ENCODE measurements at regions of chr17 and their contacts with region 1.

Region 1: GRCh38 chr17:45148183-45149036 is at the start of gene HEXIM1:
- H3K4me3 ChIP-seq: peak within 1 kb of the TSS; percentile 72
- H3K27ac ChIP-seq: peak within 1 kb of the TSS; percentile 92
- H3K4me1 ChIP-seq: peaks cover 10% of the 10 kb centered on the region; the same call in 1 of the 2 replicates
- CTCF ChIP-seq: peak; percentile 40; the same call in 1 of the 2 replicates

Region 2: GRCh38 chr17:44899069-44899782 is 249.2 kb before region 1 on chr17 and contains the start of gene EFTUD2:
- CTCF ChIA-PET with region 1: no interaction called
- POLR2A ChIA-PET with region 1: interaction called, 10 read pairs
- H3K4me3 ChIP-seq: peak within 1 kb of the TSS; percentile 74
- H3K27ac ChIP-seq: peak within 1 kb of the TSS; percentile 93
- H3K4me1 ChIP-seq: peaks cover 24% of the 10 kb centered on the region
- CTCF ChIP-seq: no peak; the same call in 1 of the 2 replicates

Region 3: GRCh38 chr17:45021607-45022287 is 126.7 kb before region 1 on chr17:
- CTCF ChIA-PET with region 1: no interaction called
- POLR2A ChIA-PET with region 1: no interaction called
- H3K4me3 ChIP-seq: peak overlapping the region; percentile 3; the same call in 1 of the 2 replicates
- H3K27ac ChIP-seq: no peak overlapping the region; the same call in 1 of the 2 replicates
- H3K4me1 ChIP-seq: peaks cover 3% of the 10 kb centered on the region; the same call in 1 of the 2 replicates
- CTCF ChIP-seq: 0 out of 2 replicates have a peak, but pooled peaks have one; percentile 28

Region 4: GRCh38 chr17:45129426-45129939 is 18.9 kb before region 1 on chr17:
- CTCF ChIA-PET with region 1: interaction called, 209 read pairs
- POLR2A ChIA-PET with region 1: interaction called, 192 read pairs
- H3K4me3 ChIP-seq: no peak overlapping the region
- H3K27ac ChIP-seq: no peak overlapping the region
- H3K4me1 ChIP-seq: peaks cover 3% of the 10 kb centered on the region
- CTCF ChIP-seq: no peak

Region 5: GRCh38 chr17:45197555-45198334 is 49.3 kb after region 1 on chr17:
- CTCF ChIA-PET with region 1: interaction called, 185 read pairs
- POLR2A ChIA-PET with region 1: interaction called, 213 read pairs
- H3K4me3 ChIP-seq: no peak overlapping the region
- H3K27ac ChIP-seq: peak overlapping the region; percentile 34
- H3K4me1 ChIP-seq: peaks cover 6% of the 10 kb centered on the region
- CTCF ChIP-seq: peak; percentile 99

Region 6: DNA sequence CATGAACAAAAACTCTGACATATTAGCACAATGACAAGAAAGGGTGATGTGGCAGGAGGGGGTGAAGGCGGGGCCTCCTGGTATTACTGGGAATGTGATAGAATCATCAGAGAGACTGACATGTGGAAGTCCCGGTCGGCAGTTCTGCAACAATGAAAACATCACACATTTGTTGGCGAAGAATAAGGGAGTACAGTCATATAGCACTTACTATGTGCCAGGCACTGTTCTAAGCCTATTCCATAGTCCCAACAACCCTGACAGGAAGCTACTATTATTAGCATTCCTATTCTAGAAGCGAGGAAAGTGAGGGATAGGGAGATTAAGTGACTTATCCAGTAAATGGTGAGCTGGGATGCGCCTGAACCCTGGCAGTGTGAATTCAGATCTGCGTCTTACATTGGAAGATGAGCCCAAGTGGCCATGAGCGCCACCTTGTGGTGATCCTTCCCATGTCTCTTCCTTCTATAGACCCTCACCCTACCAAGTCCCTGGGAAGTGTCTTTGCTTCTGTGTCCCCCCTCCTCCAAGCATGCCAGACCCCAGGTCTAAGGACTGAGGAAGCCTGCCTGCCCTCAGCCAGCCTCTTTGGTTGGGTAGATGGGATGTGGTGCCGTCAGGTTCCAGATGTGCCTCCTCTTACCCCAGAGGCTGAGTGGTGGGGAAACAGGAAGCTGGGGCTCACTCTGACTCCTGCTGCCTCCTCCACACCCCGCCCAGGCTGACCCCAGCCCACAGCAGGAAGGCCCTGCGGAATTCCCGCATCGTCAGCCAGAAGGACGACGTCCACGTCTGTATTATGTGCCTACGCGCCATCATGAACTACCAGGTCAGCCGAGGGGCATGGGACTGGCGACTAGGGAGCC is 87.2 kb after region 1 on chr17:
- CTCF ChIA-PET with region 1: interaction called, 11 read pairs
- POLR2A ChIA-PET with region 1: interaction called, 6 read pairs
- H3K4me3 ChIP-seq: no peak overlapping the region
- H3K27ac ChIP-seq: no peak overlapping the region
- H3K4me1 ChIP-seq: no peaks in the 10 kb centered on the region
- CTCF ChIP-seq: peak; percentile 66

Measured in HEK293 (cell line).